ENCODE measurements at regions of chr6 and their contacts with region 1.

Region 1: GRCh38 chr6:144582939-144583613 is 297.9 kb downstream of the UTRN start:
- DNase-seq: peak; percentile 51
- H3K4me3 Mint-ChIP-seq: peak overlapping the region; percentile 70
- H3K27ac Mint-ChIP-seq: peak overlapping the region; percentile 74
- H3K4me1 Mint-ChIP-seq: peaks cover 36% of the 10 kb centered on the region
- H3K27me3 Mint-ChIP-seq: no peaks in the 10 kb centered on the region

Region 2: DNA sequence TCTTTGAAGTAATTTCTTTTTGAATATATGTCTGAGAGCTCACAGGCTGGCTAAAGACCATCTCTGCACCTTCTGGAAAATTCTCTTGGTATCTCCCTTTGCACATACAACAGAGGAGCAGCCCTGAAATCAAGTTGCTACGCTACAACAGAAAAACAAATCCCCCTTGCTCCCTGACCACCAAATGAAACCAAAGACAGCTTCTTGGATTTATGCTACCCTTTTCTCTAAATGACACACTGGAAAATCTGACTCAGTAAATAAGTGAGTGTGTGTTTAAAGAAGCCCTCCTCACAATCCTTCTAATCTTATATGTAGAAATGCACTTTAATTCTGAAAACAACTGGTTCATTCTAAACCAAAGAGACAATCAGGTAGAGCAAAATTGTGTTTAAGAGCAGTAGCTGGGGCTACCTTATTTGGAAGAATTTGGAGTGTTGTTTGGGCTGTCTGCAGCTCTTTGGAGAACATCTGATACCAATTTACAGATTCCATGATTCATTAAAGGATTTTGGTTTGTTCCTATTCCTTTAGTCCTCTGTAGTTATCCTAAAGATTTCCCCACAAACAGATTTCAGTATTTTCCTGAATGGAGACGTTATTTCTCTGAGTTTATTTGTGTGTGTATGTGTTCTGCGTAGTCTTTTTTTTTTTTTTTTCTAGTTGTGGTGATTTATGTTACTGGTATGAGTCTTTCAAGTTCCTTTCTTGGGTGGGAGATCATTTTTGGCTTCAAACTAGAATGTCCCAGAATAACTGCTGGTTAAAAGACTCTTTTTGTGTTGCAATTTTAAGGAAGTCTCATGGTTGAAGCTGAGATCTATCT is 334.4 kb before region 1 on chr6:
- CTCF ChIA-PET with region 1: no interaction called
- POLR2A ChIA-PET with region 1: no interaction called
- intact Hi-C with region 1: loop called (anchors 1 kb)
- DNase-seq: peak; percentile 29
- H3K4me3 Mint-ChIP-seq: peak overlapping the region; percentile 21
- H3K27ac Mint-ChIP-seq: peak overlapping the region; percentile 71
- H3K4me1 Mint-ChIP-seq: peaks cover 18% of the 10 kb centered on the region
- H3K27me3 Mint-ChIP-seq: peaks cover 22% of the 10 kb centered on the region

Region 3: DNA sequence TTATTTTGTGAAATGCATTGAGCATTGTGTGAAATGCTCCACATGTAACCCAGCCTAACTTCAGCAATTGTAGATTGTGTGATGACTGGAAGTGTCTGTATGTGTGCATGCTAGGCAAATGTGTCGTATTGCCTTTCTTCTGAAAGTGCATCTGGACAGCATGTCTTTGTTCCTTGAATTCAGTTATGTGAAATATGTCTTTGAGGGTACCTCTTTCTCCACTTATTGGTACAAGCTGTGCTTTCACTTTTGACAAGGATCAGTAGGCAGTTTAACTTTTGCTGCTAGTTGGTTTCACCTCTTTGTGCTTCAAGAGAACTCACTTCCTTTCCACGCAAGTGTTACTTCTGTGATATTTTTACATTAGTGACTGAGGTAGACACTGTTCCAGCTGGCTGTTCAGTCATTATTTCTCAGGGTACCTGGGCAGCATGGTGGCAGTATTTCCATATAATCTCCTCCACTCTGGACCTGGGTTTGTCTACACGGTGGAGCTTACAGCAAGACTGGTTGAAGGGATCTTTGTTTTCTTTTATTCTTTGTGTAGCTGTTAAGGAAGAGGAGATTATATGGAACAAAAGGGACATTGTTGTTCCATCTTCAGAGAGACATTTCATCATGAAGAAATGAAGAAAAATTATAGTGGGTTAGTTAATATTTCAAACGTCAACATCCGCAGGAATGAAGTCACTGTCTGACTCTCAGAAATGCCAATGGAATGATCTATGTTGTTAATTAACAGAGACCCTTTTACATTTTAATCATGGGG is 122.6 kb before region 1 on chr6:
- CTCF ChIA-PET with region 1: no interaction called
- POLR2A ChIA-PET with region 1: no interaction called
- intact Hi-C with region 1: no loop called
- DNase-seq: peak; percentile 17
- H3K4me3 Mint-ChIP-seq: peak overlapping the region; percentile 14
- H3K27ac Mint-ChIP-seq: peak overlapping the region; percentile 61
- H3K4me1 Mint-ChIP-seq: peaks cover 21% of the 10 kb centered on the region
- H3K27me3 Mint-ChIP-seq: no peaks in the 10 kb centered on the region

Region 4: DNA sequence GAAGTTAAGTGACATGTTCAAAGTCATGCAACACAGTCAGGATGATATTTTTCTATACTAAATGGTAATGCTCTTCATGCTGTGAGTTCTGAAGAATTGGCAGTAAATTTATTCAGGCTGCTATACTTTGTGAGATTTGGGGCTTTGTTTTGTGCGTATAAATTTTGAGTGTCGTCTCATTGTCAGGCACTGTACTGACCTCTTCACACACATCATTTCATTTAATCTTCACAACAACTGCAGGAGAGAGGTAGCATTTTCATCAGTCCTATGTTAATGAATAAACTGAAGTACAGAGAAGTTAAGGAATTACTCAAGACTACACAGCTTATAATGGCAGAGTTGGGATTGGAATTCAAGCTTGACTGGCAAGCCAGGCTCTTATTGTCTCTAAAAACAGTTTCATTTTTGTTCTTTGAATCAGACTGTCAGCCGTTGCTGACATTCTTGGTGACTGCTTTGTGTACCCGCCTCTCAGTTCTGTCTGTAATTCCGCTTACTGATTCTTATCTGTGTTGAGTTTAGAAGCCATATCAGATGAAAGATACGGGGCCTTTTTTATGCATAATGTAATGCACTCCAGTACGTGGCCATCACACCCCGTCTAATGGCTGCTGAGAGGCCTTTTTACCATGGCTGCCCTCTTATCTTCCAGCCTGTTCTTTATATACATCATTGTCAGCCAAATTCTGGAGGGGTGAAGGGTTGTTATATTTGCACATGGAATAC is 23.0 kb before region 1 on chr6:
- CTCF ChIA-PET with region 1: interaction called, 5 read pairs
- POLR2A ChIA-PET with region 1: no interaction called
- intact Hi-C with region 1: loop called (anchors 2 kb)
- DNase-seq: peak; percentile 45
- H3K4me3 Mint-ChIP-seq: peak overlapping the region; percentile 56
- H3K27ac Mint-ChIP-seq: peak overlapping the region; percentile 82
- H3K4me1 Mint-ChIP-seq: peaks cover 34% of the 10 kb centered on the region
- H3K27me3 Mint-ChIP-seq: no peaks in the 10 kb centered on the region

Region 5: DNA sequence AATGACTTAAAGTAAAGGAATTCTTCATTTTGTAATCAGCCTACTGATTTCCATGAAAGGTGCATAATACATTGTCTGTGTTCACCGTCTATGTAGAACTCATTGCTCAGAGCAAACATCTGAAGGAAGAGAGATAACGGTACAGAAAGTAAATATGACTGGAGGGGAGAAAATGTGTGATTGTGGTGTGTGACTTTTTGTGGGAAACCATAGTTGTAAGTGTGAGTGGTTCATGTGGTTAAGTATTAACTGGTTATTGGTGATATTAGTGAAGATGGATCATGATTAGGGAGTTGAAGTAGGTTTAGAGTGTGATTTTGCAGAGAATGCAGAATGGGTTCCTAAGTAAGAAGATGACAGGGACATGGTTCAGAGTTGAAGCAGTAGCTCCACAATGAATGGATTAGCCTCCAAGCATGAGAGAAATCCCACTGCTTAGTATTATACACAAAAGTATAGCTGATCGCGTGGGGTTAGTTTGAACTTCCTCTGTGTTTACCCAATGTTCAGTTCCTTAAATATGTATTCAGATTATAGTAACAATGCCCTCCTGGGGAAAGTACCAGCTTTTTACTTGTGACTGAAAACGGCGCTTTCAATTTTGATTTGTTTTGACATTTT is 70.9 kb after region 1 on chr6:
- CTCF ChIA-PET with region 1: interaction called, 7 read pairs
- POLR2A ChIA-PET with region 1: interaction called, 3 read pairs
- intact Hi-C with region 1: loop called (anchors 1 kb)
- DNase-seq: no peak
- H3K4me3 Mint-ChIP-seq: peak overlapping the region; percentile 13
- H3K27ac Mint-ChIP-seq: no peak overlapping the region
- H3K4me1 Mint-ChIP-seq: peaks cover 42% of the 10 kb centered on the region
- H3K27me3 Mint-ChIP-seq: no peaks in the 10 kb centered on the region

Region 6: DNA sequence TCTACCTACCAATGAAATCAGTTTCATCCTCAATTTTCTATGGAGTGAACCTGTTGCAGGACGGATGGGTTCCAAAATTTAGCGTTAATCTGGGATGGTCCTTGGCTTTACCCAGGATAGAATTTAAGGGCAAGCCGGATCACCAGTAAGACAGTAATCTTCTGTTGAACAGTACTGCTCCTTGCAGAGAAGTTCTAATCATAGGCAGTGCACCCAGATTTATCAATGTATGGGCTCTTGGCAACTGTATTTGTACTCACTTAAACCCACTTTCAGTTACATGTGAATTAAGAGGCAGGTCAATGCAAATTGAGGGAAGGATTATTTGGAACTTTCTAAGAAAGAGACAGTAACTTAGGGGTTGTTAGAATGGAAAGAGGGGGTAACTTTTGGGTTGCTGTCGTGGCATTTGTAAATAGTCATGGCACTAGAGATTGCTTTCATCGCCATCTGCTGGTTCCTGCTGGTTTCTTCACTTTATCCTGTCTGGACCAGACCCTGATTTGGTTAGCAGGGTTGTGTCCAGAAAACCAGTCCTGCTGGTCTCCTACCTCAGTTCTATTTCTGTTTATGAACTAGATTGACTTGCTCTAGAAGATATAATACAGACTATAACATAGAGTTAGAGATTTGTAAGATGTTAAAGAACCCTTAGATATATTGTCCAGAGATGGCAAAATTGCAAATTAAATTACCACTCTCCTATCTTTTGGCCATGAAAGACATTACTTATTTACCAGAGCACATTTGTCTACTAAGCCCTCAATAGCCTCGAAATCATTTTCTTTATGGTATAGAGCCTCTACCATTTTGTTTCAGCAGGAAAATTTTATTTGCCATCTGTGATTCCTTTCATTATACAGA is 348.3 kb after region 1 on chr6:
- CTCF ChIA-PET with region 1: interaction called, 27 read pairs
- POLR2A ChIA-PET with region 1: no interaction called
- intact Hi-C with region 1: loop called (anchors 1 kb)
- DNase-seq: peak; percentile 48
- H3K4me3 Mint-ChIP-seq: no peak overlapping the region
- H3K27ac Mint-ChIP-seq: no peak overlapping the region
- H3K4me1 Mint-ChIP-seq: no peaks in the 10 kb centered on the region
- H3K27me3 Mint-ChIP-seq: no peaks in the 10 kb centered on the region

Region 7: GRCh38 chr6:145214570-145214969 is 631.5 kb after region 1 on chr6:
- CTCF ChIA-PET with region 1: interaction called, 10 read pairs
- POLR2A ChIA-PET with region 1: no interaction called
- intact Hi-C with region 1: loop called (anchors 2 kb)
- DNase-seq: no peak
- H3K4me3 Mint-ChIP-seq: no peak overlapping the region
- H3K27ac Mint-ChIP-seq: no peak overlapping the region
- H3K4me1 Mint-ChIP-seq: peaks cover 8% of the 10 kb centered on the region
- H3K27me3 Mint-ChIP-seq: peaks cover 4% of the 10 kb centered on the region